Testis (tissue), 5 donors: ENCODE measurements at regions of chr3 and their contacts with region 1.

Region 1: GRCh38 chr3:138915503-138916498 is 31.1 kb downstream of the FOXL2 start:
- DNase-seq: peak; percentile 95
- H3K4me3 ChIP-seq: peak overlapping the region; percentile 70 to 75
- H3K27ac ChIP-seq: peak overlapping the region; percentile 74 to 93
- H3K4me1 ChIP-seq: no peaks in the 10 kb centered on the region
- H3K27me3 ChIP-seq: no peaks in the 10 kb centered on the region
- CTCF ChIP-seq: peak; percentile 93 to 94 (median 93)
- POLR2A ChIP-seq: no peak

Region 2: DNA sequence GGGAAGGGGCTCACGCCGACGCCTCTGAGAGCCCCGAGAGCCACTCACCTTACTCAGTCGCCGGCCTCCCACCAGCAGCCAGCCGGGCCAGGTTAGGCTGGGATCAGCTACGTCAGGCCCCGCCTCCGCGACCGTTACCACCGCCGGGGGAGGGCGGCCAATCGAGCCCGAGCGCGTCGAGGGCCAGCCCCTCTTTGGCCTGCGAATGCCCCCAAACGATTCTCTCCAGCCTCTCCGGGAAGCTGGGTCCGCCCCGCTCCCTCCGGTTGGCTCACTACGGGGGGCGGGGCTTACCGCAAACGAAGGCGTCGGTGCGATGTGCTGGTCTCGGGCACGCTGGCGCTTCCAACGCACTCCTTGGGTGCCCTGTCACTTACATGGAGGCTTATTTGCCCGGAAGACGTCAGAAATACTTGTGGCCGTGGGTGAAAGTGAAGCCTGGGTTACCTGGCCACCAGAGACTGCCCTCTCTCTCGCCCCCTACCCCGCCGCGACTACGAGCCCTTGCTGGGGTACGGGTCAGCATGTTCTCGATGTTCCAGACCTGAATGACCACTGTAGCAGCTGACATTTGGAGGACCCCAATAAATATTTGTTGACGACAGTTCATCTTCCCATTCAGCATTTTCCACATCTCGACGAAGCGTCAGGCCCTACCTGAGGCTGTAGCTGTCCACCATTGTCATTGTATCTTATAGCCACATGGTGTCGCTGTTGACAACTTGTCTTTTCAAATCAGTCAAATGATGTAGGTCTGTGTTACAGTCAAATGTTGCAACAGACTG is 321.5 kb before region 1 on chr3 and contains the start of gene CEP70:
- intact Hi-C with region 1: loop called (anchors 5 kb)
- DNase-seq: peak; percentile 94
- H3K4me3 ChIP-seq: peak within 1 kb of the TSS; percentile 66 to 74
- H3K27ac ChIP-seq: peak within 1 kb of the TSS; percentile 73 to 81
- H3K4me1 ChIP-seq: peaks cover 3% of the 10 kb centered on the region
- H3K27me3 ChIP-seq: no peaks in the 10 kb centered on the region
- CTCF ChIP-seq: peak; percentile 85 to 92 (median 85)
- POLR2A ChIP-seq: peak; percentile 61
- total RNA-seq, gene CEP70: 37.4 to 61.4 TPM

Region 3: DNA sequence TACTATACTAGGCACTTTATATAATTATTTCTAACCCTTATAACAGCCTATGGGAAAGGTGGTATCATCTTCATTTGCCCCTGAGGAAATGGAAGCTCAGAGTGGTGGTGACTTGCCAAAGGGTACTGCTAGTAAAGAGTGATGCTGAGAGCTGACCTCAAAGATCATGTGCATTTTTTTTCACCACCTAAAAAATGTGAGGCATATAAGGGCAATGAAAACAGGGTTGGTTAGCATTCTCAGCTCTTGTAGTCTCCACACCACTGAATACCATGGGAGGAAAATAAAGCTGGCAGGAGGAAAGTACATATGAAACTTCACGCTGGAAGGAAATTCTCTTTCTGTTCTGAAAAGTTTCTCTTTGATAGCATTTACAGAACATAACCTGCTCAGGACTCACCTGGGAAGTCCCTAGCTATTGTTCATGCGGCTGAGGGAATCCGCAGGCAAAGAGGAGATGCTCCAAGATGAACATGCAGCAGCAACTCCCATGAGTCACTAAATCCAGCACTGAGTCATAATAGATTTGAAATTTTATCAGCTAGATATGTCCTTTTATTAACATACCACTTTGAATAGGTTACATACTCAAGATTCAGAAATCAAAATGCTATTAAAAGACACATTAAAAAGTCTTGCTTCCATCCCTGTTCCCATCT is 290.0 kb before region 1 on chr3:
- intact Hi-C with region 1: no loop called
- DNase-seq: no peak
- H3K4me3 ChIP-seq: no peak overlapping the region
- H3K27ac ChIP-seq: no peak overlapping the region
- H3K4me1 ChIP-seq: no peaks in the 10 kb centered on the region
- H3K27me3 ChIP-seq: no peaks in the 10 kb centered on the region
- CTCF ChIP-seq: no peak
- POLR2A ChIP-seq: no peak

Region 4: DNA sequence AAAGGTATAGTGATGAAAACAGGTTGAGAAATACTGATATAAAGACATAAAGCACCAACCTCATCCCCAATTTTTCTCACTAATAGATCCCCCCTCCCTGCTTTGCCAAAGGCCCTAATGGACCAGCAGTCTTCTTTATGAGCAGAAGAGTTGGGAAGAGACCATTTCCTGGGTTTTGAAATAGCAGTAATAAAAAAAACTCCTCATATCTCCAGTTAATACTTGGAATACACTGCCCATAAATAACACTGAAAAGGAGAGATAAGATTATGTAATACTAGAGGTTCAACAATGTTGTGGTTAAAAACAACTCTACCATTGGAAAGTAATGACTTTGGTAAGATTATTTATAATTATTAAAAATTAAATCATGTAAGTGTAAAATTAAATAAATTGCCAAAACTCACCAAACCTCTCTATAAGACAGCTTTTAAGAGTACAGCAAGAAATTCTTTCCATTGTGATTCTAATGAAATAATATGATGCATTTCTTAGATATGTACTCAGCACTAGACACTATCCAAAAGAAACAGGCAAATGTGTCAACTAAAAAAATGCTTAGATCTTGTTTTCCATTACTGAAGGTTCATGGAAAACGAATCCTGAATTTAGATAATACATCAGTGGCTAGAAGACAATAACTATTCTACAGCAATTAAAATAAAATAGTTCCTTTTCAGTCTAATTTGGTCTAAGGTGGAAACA is 219.0 kb before region 1 on chr3:
- intact Hi-C with region 1: loop called (anchors 5 kb)
- DNase-seq: no peak
- H3K4me3 ChIP-seq: no peak overlapping the region
- H3K27ac ChIP-seq: no peak overlapping the region
- H3K4me1 ChIP-seq: no peaks in the 10 kb centered on the region
- H3K27me3 ChIP-seq: no peaks in the 10 kb centered on the region
- CTCF ChIP-seq: no peak
- POLR2A ChIP-seq: no peak

Region 5: DNA sequence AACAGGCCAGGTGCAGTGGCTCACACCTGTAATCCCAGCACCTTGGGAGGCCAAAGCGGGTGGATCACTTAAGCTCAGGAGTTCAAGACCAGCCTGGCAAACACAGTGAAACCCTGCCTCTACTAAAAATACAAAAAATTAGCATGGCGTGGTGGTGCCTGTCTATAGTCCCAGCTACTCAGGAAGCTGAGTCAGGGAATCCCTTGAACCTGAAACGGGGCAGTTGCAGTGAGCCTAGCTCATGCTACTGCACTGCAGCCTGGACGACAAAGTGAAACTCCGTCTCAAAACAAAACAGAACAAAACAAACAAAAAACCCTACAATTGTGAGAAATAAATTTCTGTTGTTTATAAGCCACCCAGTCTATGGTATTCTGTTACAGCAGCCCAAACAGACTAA is 175.7 kb before region 1 on chr3:
- intact Hi-C with region 1: no loop called
- DNase-seq: no peak
- H3K4me3 ChIP-seq: no peak overlapping the region
- H3K27ac ChIP-seq: no peak overlapping the region
- H3K4me1 ChIP-seq: no peaks in the 10 kb centered on the region
- H3K27me3 ChIP-seq: no peaks in the 10 kb centered on the region
- CTCF ChIP-seq: no peak
- POLR2A ChIP-seq: no peak

Region 6: DNA sequence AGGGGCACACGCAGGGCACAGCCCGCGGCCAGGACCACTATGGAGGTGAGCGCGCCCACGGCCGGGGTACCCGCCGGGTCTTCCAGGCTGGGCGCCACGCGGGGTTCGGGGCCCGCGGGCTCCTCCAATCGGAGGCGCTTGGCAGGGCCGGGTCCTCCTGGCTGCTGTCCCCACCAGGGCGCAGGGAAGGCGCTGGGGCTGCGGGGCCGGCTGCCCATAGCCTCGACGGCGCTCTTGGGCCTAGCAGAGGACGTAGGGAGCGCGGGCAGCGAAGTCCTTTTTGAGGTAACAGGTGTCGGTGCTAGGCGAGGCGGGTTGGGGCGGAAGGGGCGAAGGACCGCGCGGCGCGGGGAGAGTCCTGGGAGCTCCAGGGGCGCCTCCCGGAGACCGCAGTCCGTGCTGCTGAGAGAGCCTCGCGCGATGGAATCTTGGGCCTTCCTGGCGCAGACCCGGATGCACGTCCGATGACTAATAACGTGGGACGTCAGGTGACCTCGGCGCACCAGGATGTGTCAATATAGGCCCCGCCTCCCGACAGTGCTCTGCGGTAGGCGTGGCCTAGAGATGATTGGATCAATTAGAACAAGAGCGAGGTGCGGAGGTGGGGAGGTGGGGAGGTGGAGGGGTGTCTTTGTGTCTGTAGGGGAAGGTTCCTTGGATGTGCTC is 90.4 kb after region 1 on chr3 and contains the start of gene PRR23A:
- intact Hi-C with region 1: no loop called
- DNase-seq: peak; percentile 88
- H3K4me3 ChIP-seq: peak within 1 kb of the TSS; percentile 46 to 63
- H3K27ac ChIP-seq: no peak within 1 kb of the TSS
- H3K4me1 ChIP-seq: no peaks in the 10 kb centered on the region
- H3K27me3 ChIP-seq: no peaks in the 10 kb centered on the region
- CTCF ChIP-seq: no peak
- POLR2A ChIP-seq: no peak
- total RNA-seq, gene PRR23A: 6.6 to 14.8 TPM

Region 7: GRCh38 chr3:140636406-140637130 is 1720.8 kb after region 1 on chr3:
- intact Hi-C with region 1: loop called (anchors 10 kb)
- DNase-seq: peak; percentile 16
- H3K4me3 ChIP-seq: no peak overlapping the region
- H3K27ac ChIP-seq: no peak overlapping the region
- H3K4me1 ChIP-seq: no peaks in the 10 kb centered on the region
- H3K27me3 ChIP-seq: no peaks in the 10 kb centered on the region
- CTCF ChIP-seq: no peak
- POLR2A ChIP-seq: no peak